PC-3 (cell line): ENCODE measurements at regions of chr19 and their contacts with region 1.

Region 1: DNA sequence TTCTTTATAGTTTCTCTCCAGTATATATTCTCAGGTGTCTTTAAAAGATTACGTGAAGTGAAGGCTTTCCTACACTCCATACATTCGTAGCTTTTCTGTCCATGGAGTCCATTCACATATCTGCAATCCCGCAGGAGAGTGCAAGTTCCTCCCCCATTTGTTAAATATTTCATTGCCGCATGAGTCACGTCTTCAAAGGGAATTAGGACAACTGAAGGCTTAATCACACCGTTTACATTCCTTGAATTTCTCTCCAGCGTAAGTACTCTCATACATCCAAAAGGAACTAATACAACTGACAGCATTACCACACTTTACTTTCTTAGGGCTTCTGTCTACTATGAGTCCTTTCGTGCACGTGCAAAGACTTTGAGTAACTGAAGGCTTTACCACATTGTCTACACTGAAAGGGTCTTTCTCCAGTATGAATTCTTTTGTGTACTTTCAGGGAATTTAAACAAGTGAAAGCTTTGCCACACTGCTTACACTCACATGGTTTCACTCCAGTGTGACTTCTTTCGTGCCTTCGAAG is 28.9 kb upstream of the ZNF564 start:
- DNase-seq: peak; percentile 91
- ATAC-seq: peak; percentile 90
- H3K4me3 ChIP-seq: no peak overlapping the region
- H3K27ac ChIP-seq: no peak overlapping the region
- H3K4me1 ChIP-seq: 0 out of 2 replicates have a peak, but pooled peaks cover 4% of the 10 kb centered on the region
- H3K27me3 ChIP-seq: no peaks in the 10 kb centered on the region
- CTCF ChIP-seq: no peak

Region 2: GRCh38 chr19:12202250-12202649 is 378.0 kb before region 1 on chr19:
- CTCF ChIA-PET with region 1: interaction called, 15 read pairs
- POLR2A ChIA-PET with region 1: no interaction called
- intact Hi-C with region 1: no loop called
- DNase-seq: no peak
- ATAC-seq: peak; percentile 75
- H3K4me3 ChIP-seq: no peak overlapping the region
- H3K27ac ChIP-seq: no peak overlapping the region
- H3K4me1 ChIP-seq: no peaks in the 10 kb centered on the region
- H3K27me3 ChIP-seq: no peaks in the 10 kb centered on the region
- CTCF ChIP-seq: peak; percentile 45; the same call in 1 of the 2 replicates

Region 3: GRCh38 chr19:12551060-12551832 is 29.0 kb before region 1 on chr19 and contains the start of gene ZNF564:
- CTCF ChIA-PET with region 1: no interaction called
- POLR2A ChIA-PET with region 1: no interaction called
- intact Hi-C with region 1: no loop called
- DNase-seq: peak; percentile 99
- ATAC-seq: peak; percentile 97
- H3K4me3 ChIP-seq: peak within 1 kb of the TSS; percentile 83
- H3K27ac ChIP-seq: peak within 1 kb of the TSS; percentile 73
- H3K4me1 ChIP-seq: 0 out of 2 replicates have a peak, but pooled peaks cover 6% of the 10 kb centered on the region
- H3K27me3 ChIP-seq: no peaks in the 10 kb centered on the region
- CTCF ChIP-seq: no peak
- total RNA-seq, gene ZNF564: 3.8 and 6.0 TPM in 2 replicates

Region 4: DNA sequence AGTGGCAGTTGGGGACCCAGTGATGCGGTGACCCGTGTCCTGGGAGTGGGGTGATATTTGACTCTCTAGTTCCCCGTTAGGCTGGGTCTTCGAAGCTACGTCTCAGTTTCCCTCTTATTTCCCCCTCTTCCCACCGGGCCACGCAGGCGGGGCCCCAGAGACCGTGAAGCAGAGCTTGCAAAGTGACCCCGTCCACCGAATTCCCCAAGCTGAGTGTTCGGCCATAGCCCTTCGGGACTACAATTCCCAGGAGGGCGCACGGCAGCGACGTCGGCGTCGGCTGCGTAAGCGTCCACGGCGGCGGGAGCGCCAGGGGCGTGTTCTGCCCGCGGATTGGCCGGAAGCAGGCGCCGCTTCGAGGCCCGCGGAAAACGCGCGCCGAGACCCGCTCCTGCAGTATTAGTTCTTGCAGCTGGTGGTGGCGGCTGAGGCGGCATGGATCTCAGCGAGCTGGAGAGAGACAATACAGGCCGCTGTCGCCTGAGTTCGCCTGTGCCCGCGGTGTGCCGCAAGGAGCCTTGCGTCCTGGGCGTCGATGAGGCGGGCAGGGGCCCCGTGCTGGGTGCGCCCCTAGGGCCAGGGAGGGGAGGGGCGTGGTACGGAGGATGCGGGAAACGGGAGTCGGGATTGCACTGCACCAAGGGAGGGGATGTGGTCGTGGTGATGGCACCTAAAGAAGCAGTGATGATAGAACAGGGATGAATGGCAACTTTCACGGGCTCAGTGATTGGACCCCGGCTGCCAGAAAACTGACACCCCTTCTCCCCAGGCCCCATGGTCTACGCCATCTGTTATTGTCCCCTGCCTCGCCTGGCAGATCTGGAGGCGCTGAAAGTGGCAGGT is 226.2 kb after region 1 on chr19 and contains the start of gene RNASEH2A:
- CTCF ChIA-PET with region 1: no interaction called
- POLR2A ChIA-PET with region 1: no interaction called
- intact Hi-C with region 1: no loop called
- DNase-seq: peak; percentile 97
- ATAC-seq: peak; percentile 88
- H3K4me3 ChIP-seq: peak within 1 kb of the TSS; percentile 76
- H3K27ac ChIP-seq: no peak within 1 kb of the TSS; the same call in 1 of the 2 replicates
- H3K4me1 ChIP-seq: peaks cover 17% of the 10 kb centered on the region
- H3K27me3 ChIP-seq: no peaks in the 10 kb centered on the region
- CTCF ChIP-seq: no peak
- total RNA-seq, gene RNASEH2A: 118 and 120 TPM in 2 replicates